IMR-90 (cell line): ENCODE measurements at regions of chr3 and their contacts with region 1.

Region 1: GRCh38 chr3:115861166-115861733 is 237.9 kb downstream of the GAP43 start:
- DNase-seq: no peak
- ATAC-seq: no peak
- H3K4me3 ChIP-seq: no peak overlapping the region
- H3K27ac ChIP-seq: no peak overlapping the region
- H3K4me1 ChIP-seq: peaks cover 13% of the 10 kb centered on the region
- H3K27me3 ChIP-seq: no peaks in the 10 kb centered on the region
- CTCF ChIP-seq: no peak
- POLR2A ChIP-seq: no peak
- RAD21 ChIP-seq: no peak

Region 2: DNA sequence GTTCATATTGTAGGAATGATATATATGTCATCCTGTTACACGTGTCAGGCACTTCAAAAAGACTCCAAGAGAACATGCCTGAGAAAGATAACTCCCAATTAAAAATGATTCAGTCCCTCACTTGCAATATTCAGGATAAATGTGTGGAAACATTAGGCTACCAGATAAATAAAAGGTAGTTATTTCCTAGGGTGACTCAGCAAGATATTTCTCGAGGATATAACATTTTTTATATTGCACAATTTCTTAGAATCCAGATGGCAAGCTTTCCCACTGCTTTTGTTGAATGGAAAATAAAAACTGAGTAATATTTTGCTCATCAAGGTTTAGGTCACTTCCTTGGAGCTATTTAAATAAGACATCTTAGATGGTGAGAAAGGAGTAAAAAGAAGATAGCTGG is 56.5 kb before region 1 on chr3:
- CTCF ChIA-PET with region 1: no interaction called
- POLR2A ChIA-PET with region 1: no interaction called
- dilution Hi-C with region 1: no loop called
- in situ Hi-C with region 1: no loop called
- intact Hi-C with region 1: loop called (anchors 10 kb)
- DNase-seq: peak; percentile 93
- ATAC-seq: peak; percentile 45
- H3K4me3 ChIP-seq: no peak overlapping the region
- H3K27ac ChIP-seq: peak overlapping the region; percentile 85
- H3K4me1 ChIP-seq: peaks cover 19% of the 10 kb centered on the region
- H3K27me3 ChIP-seq: no peaks in the 10 kb centered on the region
- CTCF ChIP-seq: no peak
- POLR2A ChIP-seq: no peak
- RAD21 ChIP-seq: no peak

Region 3: GRCh38 chr3:115875460-115875859 is 14.2 kb after region 1 on chr3:
- CTCF ChIA-PET with region 1: interaction called, 11 read pairs
- POLR2A ChIA-PET with region 1: no interaction called
- dilution Hi-C with region 1: no loop called
- in situ Hi-C with region 1: no loop called
- intact Hi-C with region 1: no loop called
- DNase-seq: no peak
- ATAC-seq: no peak
- H3K4me3 ChIP-seq: no peak overlapping the region
- H3K27ac ChIP-seq: no peak overlapping the region
- H3K4me1 ChIP-seq: no peaks in the 10 kb centered on the region; the same call in 1 of the 2 replicates
- H3K27me3 ChIP-seq: no peaks in the 10 kb centered on the region
- CTCF ChIP-seq: no peak
- POLR2A ChIP-seq: no peak
- RAD21 ChIP-seq: no peak

Region 4: DNA sequence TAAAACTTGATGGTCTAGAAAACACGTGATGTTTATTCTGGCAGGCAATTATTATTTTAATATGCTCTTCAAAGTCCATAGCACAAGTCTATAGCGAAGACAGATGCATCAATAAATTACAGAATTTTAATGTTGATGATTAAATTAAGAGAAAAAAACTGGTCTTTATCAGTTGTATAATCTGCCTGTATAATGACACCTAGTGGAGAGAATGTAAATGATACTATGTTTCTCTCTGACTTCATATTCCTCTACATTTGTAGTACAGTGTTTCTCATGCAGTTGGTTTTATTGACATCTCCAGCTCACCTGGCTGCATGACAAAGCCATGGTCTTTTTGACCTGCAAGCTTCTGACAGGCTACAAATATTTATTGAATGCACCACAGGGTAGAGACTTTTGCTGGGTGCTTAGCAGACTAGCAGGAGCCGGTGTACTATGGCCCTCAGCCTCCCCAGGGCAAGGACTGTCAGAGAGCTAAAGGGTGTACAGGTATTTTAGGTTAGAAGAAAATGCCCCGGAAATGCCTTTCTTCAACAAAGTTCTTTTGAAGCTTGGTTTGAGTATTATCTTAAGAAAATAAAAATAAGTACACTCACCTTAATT is 51.9 kb after region 1 on chr3:
- CTCF ChIA-PET with region 1: no interaction called
- POLR2A ChIA-PET with region 1: no interaction called
- dilution Hi-C with region 1: no loop called
- in situ Hi-C with region 1: no loop called
- intact Hi-C with region 1: loop called (anchors 5 kb)
- DNase-seq: peak; percentile 28
- ATAC-seq: peak; percentile 64
- H3K4me3 ChIP-seq: no peak overlapping the region
- H3K27ac ChIP-seq: no peak overlapping the region
- H3K4me1 ChIP-seq: no peaks in the 10 kb centered on the region; the same call in 1 of the 2 replicates
- H3K27me3 ChIP-seq: no peaks in the 10 kb centered on the region
- CTCF ChIP-seq: peak; percentile 54
- POLR2A ChIP-seq: no peak
- RAD21 ChIP-seq: no peak